Ovary (tissue), 10 donors: ENCODE measurements at regions of chr6 and their contacts with region 1.

Region 1: DNA sequence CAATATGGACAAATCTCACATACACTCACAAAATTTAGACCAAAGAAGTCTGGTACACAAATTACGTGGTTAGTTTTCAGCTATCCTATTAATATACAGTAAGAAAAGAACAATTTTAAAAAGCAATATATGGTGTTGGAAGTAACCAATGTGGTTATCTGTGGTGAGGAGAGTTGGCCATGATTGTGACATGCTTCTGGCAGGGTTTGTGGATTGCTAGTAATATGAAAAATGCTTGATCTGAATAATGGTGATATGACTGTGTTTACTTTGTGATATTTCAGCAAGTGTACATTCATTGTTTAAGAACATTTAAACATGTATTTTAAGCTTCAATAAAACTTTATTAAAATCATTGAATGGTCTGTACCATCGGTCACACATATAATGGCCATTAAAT is 99.1 kb downstream of the ADGB start:
- DNase-seq: no peak
- H3K4me3 ChIP-seq: no peak overlapping the region
- H3K27ac ChIP-seq: no peak overlapping the region
- H3K4me1 ChIP-seq: no peaks in the 10 kb centered on the region
- H3K27me3 ChIP-seq: no peaks in the 10 kb centered on the region
- CTCF ChIP-seq: no peak
- EP300 ChIP-seq: no peak
- POLR2A ChIP-seq: no peak

Region 2: DNA sequence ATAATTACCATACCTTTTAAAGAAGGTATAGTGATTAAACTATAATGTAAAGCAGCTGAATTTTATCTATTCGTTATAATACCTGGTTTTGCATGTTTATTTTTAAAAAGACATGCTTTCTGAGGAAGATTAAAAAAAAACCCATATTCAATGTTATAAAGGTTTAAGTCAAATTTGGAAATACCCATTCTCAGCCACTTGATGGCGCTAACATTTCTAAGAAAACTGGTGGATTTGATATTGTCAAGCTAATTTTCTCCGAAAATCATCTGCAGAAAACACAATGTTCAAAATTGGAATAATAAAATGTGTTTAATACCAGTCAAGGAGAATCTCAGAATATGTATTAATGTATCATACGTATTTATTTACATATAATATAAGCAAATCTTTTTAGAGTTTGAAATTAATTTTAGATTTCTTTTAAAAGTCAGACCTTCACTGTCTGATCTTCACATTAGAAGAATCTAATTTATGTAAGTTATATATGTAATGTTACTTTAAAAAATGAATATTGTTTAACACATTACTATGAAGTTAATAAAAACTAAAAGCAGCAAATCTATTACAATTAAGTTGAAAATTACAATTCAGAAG is 768.8 kb before region 1 on chr6:
- intact Hi-C with region 1: loop called in 1 of 4 experiments (anchors 10 kb)
- DNase-seq: no peak
- H3K4me3 ChIP-seq: no peak overlapping the region
- H3K27ac ChIP-seq: no peak overlapping the region
- H3K4me1 ChIP-seq: no peaks in the 10 kb centered on the region
- H3K27me3 ChIP-seq: no peaks in the 10 kb centered on the region
- CTCF ChIP-seq: peak in 1 of 3 donors; percentile 35
- EP300 ChIP-seq: no peak
- POLR2A ChIP-seq: no peak